SK-N-SH (cell line): ENCODE measurements at regions of chr3 and their contacts with region 1.

Region 1: GRCh38 chr3:197050511-197050910 is 20.9 kb upstream of the MELTF start:
- DNase-seq: no peak
- H3K4me3 ChIP-seq: no peak overlapping the region
- H3K27ac ChIP-seq: no peak overlapping the region
- H3K4me1 ChIP-seq: no peaks in the 10 kb centered on the region
- H3K27me3 ChIP-seq: no peaks in the 10 kb centered on the region
- CTCF ChIP-seq: no peak
- EP300 ChIP-seq: no peak
- RAD21 ChIP-seq: no peak

Region 2: DNA sequence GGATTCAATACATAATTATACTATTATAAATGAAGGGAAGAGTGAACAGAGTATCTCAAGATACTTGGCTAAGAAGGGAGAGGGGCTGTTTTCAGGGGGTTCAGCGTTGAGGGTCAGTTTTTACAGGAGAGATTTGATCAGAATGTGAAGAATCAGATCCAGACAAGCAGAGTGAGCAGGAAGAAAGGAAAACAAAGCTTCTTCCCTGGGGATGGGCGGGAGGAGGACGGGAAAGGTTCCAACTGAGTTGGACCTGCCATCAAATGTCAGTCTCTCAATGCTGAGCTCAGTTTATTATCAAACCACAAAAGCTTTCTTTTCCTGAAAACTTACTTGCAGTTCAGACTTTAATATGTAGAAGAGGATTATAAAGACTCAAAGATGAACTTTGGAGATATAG is 14.9 kb before region 1 on chr3:
- CTCF ChIA-PET with region 1: interaction called, 71 read pairs
- POLR2A ChIA-PET with region 1: no interaction called
- DNase-seq: no peak
- H3K4me3 ChIP-seq: no peak overlapping the region
- H3K27ac ChIP-seq: no peak overlapping the region
- H3K4me1 ChIP-seq: peaks cover 11 to 14% of the 10 kb centered on the region in 2 experiments; a peak in 3 of 4 replicates
- H3K27me3 ChIP-seq: no peaks in the 10 kb centered on the region
- CTCF ChIP-seq: no peak
- EP300 ChIP-seq: no peak
- RAD21 ChIP-seq: no peak